GM12878 (cell line): ENCODE measurements at regions of chr11 and their contacts with region 1.

Region 1: GRCh38 chr11:9613118-9613829 is 39.8 kb downstream of the WEE1 start:
- DNase-seq: no peak
- ATAC-seq: peak; percentile 70
- H3K4me3 ChIP-seq: peak overlapping the region; percentile 68
- H3K27ac ChIP-seq: peak overlapping the region; percentile 91
- H3K4me1 ChIP-seq: peaks cover 43% of the 10 kb centered on the region
- H3K27me3 ChIP-seq: no peaks in the 10 kb centered on the region
- CTCF ChIP-seq: peak; percentile 94 to 97 (median 96)
- EP300 ChIP-seq: no peak
- POLR2A ChIP-seq: peak; percentile 60
- RAD21 ChIP-seq: peak; percentile 93

Region 2: DNA sequence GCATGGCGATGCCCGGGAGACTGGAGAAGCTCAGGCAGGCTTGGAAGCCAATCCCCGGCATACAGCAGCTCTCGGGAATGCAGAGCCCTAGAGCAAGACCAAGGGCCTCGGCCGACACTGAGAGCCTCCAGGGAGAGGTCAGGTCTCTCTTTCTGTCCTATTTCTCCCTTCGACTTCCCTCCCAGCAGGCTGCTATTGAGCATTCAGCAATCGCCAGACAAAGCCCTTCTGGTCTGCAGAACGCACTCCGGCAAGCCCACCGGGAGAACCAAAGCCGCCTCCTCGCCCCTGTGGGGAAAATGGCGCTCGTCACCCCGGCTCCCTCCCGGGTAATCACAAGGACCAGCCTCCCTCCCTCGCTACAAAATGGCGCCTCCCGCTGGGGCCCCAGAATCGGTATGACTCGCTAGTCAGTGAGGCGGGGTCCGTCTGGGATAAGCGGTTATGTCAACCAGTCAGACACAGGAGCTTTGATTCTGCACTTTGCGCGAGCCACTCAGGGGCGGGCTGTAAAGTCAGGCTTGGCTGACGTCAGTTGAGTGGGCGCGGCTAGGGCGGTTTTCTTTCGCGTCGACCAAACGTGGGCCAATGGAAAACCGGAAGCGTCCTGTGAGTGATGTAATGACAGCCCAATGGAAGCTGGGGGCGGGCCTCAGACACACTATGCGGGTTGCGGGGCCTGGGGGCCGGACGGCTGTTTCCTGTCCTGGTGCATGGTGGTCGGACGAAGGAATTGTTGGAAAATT is 152.8 kb before region 1 on chr11 and contains the start of gene ZNF143:
- CTCF ChIA-PET with region 1: interaction called, 5 read pairs
- POLR2A ChIA-PET with region 1: interaction called, 4 read pairs
- RAD21 ChIA-PET with region 1: interaction called, 3 read pairs
- SMC1A ChIA-PET with region 1: interaction called, 4 read pairs
- in situ Hi-C with region 1: no loop called
- intact Hi-C with region 1: loop called (anchors 5 kb)
- DNase-seq: peak; percentile 99
- ATAC-seq: peak; percentile 88
- H3K4me3 ChIP-seq: peak within 1 kb of the TSS; percentile 98
- H3K27ac ChIP-seq: peak within 1 kb of the TSS; percentile 100
- H3K4me1 ChIP-seq: peaks cover 7% of the 10 kb centered on the region
- H3K27me3 ChIP-seq: no peaks in the 10 kb centered on the region
- CTCF ChIP-seq: no peak
- EP300 ChIP-seq: peak in 1 of 2 experiments; percentile 9; a peak in 1 of 4 replicates
- POLR2A ChIP-seq: peak; percentile 90
- RAD21 ChIP-seq: no peak
- polyA plus RNA-seq, gene ZNF143: 16.1 to 18.3 TPM

Region 3: GRCh38 chr11:9573052-9573774 is 40.1 kb before region 1 on chr11 and contains the start of gene WEE1:
- CTCF ChIA-PET with region 1: interaction called, 23 read pairs
- POLR2A ChIA-PET with region 1: interaction called, 9 read pairs
- RAD21 ChIA-PET with region 1: interaction called, 16 read pairs
- SMC1A ChIA-PET with region 1: interaction called, 25 read pairs
- in situ Hi-C with region 1: no loop called
- intact Hi-C with region 1: loop called (anchors 1 kb)
- DNase-seq: peak; percentile 86
- ATAC-seq: peak; percentile 94
- H3K4me3 ChIP-seq: peak within 1 kb of the TSS; percentile 90
- H3K27ac ChIP-seq: peak within 1 kb of the TSS; percentile 90
- H3K4me1 ChIP-seq: peaks cover 6% of the 10 kb centered on the region; the same call in 1 of the 2 replicates
- H3K27me3 ChIP-seq: no peaks in the 10 kb centered on the region
- CTCF ChIP-seq: no peak
- EP300 ChIP-seq: no peak
- POLR2A ChIP-seq: peak; percentile 84
- RAD21 ChIP-seq: no peak
- polyA plus RNA-seq, gene WEE1: 20.6 to 22.2 TPM

Region 4: DNA sequence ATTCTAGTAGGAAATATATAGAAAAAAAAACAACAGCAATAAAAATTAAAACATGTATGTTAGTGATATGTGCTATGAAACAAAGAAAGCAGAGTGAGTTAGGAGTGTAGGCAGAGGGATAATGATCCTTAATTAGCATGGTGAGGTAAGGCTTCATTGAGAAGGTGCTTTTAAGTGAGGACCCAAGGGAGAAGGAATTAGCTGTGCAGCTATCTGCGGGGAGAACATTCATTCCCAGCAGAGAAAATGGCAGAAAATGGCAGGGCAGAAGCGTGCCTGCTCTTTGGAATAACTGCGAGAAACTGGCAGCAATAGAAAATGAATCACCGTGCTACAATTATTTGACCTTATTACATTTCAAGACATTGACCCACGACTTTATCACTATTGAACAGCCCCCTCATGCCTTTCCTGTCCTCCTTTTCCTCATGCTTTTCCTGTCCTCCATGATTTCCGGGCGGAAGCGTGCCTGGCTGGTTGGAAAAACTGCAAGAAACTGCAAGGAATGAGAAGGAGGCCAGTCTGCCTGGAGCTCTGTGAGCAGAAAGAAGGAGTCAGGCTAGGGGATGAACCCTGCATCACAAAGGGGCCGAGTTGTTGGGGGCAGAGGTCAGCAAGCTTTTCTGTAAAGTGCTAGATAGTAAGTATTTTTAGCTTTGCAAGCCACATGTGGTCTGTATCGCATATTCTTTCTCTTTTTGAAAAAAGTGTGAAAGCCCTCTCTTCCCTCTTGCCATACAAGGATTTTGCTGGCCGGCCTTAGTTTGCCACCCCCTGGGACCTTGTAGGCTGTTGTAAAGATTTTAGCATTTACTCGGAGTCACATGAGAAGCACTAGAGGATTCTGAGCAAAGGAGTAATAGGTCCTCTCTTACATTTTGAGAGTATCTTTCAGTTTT is 13.5 kb after region 1 on chr11:
- CTCF ChIA-PET with region 1: interaction called, 8 read pairs
- POLR2A ChIA-PET with region 1: interaction called, 3 read pairs
- RAD21 ChIA-PET with region 1: interaction called, 13 read pairs
- SMC1A ChIA-PET with region 1: interaction called, 7 read pairs
- in situ Hi-C with region 1: no loop called
- intact Hi-C with region 1: no loop called
- DNase-seq: no peak
- ATAC-seq: peak; percentile 73
- H3K4me3 ChIP-seq: no peak overlapping the region
- H3K27ac ChIP-seq: no peak overlapping the region
- H3K4me1 ChIP-seq: peaks cover 36% of the 10 kb centered on the region
- H3K27me3 ChIP-seq: no peaks in the 10 kb centered on the region
- CTCF ChIP-seq: no peak
- EP300 ChIP-seq: 0 out of 4 replicates have a peak, but pooled peaks of 1 of the 2 experiments have one; percentile 19
- POLR2A ChIP-seq: no peak
- RAD21 ChIP-seq: no peak

Region 5: DNA sequence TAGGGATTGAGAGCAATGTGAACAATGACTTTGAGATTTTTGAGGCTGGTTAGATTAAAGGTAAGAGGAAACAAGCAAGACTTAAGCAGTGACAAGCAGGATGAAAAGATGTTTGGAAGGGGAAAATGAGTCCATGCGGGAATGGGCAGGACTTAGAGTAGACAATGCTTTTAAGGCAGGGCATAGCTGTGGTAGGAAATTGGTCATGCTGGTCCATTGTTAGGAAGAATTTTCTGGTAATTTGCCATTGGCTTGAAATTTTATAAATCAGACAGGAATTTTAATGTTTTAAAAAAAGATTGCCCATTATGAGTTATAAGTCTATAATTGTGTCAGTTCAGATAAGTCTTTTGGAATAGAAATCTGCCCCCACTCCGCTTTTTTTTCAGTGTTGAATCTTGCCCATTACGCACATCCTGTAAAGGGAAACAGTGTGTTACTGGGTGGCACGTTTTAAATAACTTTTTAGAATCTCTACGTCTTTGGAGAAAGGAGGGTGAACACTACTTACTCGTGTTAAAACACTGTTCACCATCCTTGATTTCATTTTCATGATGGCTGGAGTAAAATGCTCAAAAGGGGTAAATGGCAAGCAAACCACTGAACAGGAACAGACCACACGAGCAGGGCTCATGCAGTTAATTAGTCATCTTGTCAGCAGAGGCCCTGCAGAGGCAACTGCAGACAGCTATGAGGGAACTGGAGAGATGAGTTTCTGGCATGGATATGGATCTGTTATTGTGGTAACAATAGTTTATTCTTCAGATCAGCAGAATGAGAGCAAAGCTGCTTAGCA is 75.6 kb after region 1 on chr11:
- CTCF ChIA-PET with region 1: interaction called, 8 read pairs
- POLR2A ChIA-PET with region 1: no interaction called
- RAD21 ChIA-PET with region 1: interaction called, 4 read pairs
- SMC1A ChIA-PET with region 1: interaction called, 5 read pairs
- in situ Hi-C with region 1: no loop called
- intact Hi-C with region 1: loop called (anchors 5 kb)
- DNase-seq: peak; percentile 81
- ATAC-seq: peak; percentile 92
- H3K4me3 ChIP-seq: peak overlapping the region; percentile 51
- H3K27ac ChIP-seq: peak overlapping the region; percentile 81
- H3K4me1 ChIP-seq: peaks cover 54% of the 10 kb centered on the region
- H3K27me3 ChIP-seq: no peaks in the 10 kb centered on the region
- CTCF ChIP-seq: no peak
- EP300 ChIP-seq: no peak; a peak in 1 of 4 replicates
- POLR2A ChIP-seq: no peak
- RAD21 ChIP-seq: 0 out of 2 replicates have a peak, but pooled peaks have one; percentile 13

Region 6: DNA sequence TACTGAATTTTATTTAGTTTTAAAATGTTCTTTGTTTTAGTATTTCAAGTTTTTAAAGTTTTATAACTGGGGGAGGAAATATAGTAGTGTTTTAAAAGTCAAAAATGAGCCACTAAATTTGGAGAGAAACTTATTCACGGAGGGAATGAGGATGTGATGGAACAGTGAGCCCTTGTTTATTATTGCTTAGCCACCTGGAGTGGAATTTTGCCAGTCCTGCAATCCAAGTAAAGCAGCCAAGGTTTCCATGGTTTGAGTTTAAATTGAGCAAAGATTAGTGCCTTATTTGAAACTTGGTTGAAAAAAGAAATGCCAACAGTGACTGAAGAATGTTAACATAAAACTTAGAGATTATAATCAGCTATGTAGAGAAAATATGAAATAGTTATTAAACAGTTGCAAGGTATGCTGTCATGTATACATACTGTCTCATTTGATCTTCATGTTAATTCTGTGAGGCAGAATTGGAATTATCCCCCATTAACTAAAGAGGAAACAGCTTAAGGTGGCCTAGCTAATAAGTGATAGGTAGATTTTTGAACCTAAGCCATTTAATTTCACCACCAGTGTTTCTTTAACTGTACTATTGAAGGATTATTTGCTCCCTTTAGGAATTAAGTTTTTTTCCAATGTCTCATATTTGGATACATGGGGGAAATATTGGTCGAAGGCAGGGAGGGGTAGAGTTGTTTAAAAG is 87.0 kb after region 1 on chr11:
- CTCF ChIA-PET with region 1: no interaction called
- POLR2A ChIA-PET with region 1: no interaction called
- RAD21 ChIA-PET with region 1: no interaction called
- SMC1A ChIA-PET with region 1: no interaction called
- in situ Hi-C with region 1: no loop called
- intact Hi-C with region 1: no loop called
- DNase-seq: no peak
- ATAC-seq: no peak
- H3K4me3 ChIP-seq: no peak overlapping the region
- H3K27ac ChIP-seq: no peak overlapping the region
- H3K4me1 ChIP-seq: peaks cover 34% of the 10 kb centered on the region
- H3K27me3 ChIP-seq: no peaks in the 10 kb centered on the region
- CTCF ChIP-seq: no peak
- EP300 ChIP-seq: no peak
- POLR2A ChIP-seq: no peak
- RAD21 ChIP-seq: no peak

Region 7: DNA sequence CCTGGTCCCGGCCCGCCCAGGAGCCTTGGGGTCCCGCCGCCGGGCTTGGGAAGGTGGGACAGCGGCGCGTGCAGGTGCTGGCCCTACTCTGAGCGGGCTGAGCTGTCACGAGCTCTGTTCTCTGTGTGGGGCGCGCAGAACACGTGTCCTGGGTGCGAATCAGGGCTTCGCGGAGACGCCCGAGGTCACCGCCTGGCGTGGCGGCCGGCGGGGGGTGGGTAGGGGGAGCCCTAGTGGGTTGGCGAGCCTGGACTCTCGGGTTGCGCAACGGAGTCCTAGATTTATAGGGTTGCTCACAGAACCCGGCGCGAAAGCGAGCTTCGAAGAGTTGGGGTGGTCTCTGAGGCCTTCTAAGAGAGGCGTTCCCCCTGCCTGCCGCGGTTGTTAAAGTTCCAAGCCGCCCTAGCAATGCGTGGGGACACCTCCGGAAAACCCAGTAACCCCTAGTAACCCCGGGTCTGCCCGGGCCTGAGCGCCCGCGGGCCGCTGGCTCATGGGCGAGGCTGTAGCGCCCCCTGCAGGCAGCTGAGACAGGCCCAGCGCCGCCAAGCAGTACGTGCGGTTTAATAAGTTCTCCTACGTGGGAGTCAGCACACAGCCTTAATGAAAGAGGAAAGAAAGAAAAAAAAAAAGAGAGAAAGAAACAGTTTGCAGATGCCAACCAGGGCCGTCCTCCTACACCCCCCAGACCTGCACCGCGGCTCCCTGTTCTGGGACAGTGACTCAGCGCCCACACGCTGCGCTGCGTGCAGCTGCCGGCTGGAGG is 694.4 kb after region 1 on chr11:
- CTCF ChIA-PET with region 1: no interaction called
- POLR2A ChIA-PET with region 1: interaction called, 6 read pairs
- RAD21 ChIA-PET with region 1: no interaction called
- SMC1A ChIA-PET with region 1: no interaction called
- in situ Hi-C with region 1: loop called (anchors 10 kb)
- intact Hi-C with region 1: loop called (anchors 10 kb)
- DNase-seq: peak; percentile 60
- ATAC-seq: peak; percentile 84
- H3K4me3 ChIP-seq: peak overlapping the region; percentile 48; the same call in 1 of the 2 replicates
- H3K27ac ChIP-seq: peak overlapping the region; percentile 20; the same call in 1 of the 2 replicates
- H3K4me1 ChIP-seq: peaks cover 47% of the 10 kb centered on the region
- H3K27me3 ChIP-seq: peaks cover 32 to 41% of the 10 kb centered on the region in 2 experiments
- CTCF ChIP-seq: peak; percentile 78 to 89 (median 87)
- EP300 ChIP-seq: 0 out of 4 replicates have a peak, but pooled peaks of 1 of the 2 experiments have one; percentile 16
- POLR2A ChIP-seq: no peak; the same call in 1 of the 2 replicates
- RAD21 ChIP-seq: peak; percentile 86